ENCODE measurements at regions of chr2 and their contacts with region 1.

Region 1: GRCh38 chr2:73828818-73829570 is at the start of gene STAMBP:
- DNase-seq: peak; percentile 96
- H3K4me3 Mint-ChIP-seq: peak within 1 kb of the TSS; percentile 94
- H3K27ac Mint-ChIP-seq: peak within 1 kb of the TSS; percentile 94
- H3K4me1 Mint-ChIP-seq: peaks cover 43% of the 10 kb centered on the region
- H3K27me3 Mint-ChIP-seq: no peaks in the 10 kb centered on the region
- total RNA-seq, gene STAMBP: 80.5 to 80.7 TPM

Region 2: DNA sequence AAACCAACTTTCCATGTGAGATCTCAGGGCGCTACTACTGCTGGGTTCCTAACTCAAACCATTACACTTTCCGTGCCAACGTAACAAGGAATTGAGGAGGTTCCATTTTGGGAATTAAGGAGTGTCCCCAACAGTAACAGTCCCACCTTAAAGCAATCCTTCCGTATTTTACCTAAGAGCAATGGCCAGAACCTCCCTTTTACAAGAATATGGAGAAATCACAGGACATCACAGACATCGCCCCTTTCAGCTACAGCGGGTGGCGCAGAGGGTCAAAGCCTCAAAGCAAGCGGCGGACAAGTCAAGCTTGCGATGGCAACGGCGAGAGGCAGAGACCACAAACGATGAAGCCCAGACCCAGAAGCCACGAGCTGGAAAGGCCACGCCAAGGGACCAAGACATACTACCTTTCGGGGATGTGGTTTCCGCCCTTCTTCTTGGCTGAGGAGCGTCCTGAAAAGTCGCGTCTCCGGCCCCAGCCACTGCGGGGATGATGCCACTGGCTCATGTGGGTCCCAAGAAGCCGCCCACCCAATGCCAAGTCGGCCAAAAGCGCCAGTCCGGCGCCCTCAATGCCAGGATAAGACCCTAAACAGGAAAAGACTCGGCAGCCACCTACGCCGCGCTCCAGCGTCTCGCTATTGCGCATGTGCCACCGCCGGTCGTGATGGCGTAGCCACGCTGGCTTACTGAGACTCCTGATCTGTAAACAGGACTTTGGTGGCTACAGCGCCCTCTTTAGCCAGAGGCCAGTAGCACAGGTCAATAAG is 49.3 kb before region 1 on chr2 and contains the start of gene DUSP11:
- CTCF ChIA-PET with region 1: interaction called, 3 read pairs
- intact Hi-C with region 1: loop called (anchors 1 kb)
- DNase-seq: peak; percentile 99
- H3K4me3 Mint-ChIP-seq: peak within 1 kb of the TSS; percentile 99
- H3K27ac Mint-ChIP-seq: peak within 1 kb of the TSS; percentile 96
- H3K4me1 Mint-ChIP-seq: peaks cover 24% of the 10 kb centered on the region
- H3K27me3 Mint-ChIP-seq: peaks cover 2% of the 10 kb centered on the region
- total RNA-seq, gene DUSP11: 22.7 to 24.4 TPM

Region 3: DNA sequence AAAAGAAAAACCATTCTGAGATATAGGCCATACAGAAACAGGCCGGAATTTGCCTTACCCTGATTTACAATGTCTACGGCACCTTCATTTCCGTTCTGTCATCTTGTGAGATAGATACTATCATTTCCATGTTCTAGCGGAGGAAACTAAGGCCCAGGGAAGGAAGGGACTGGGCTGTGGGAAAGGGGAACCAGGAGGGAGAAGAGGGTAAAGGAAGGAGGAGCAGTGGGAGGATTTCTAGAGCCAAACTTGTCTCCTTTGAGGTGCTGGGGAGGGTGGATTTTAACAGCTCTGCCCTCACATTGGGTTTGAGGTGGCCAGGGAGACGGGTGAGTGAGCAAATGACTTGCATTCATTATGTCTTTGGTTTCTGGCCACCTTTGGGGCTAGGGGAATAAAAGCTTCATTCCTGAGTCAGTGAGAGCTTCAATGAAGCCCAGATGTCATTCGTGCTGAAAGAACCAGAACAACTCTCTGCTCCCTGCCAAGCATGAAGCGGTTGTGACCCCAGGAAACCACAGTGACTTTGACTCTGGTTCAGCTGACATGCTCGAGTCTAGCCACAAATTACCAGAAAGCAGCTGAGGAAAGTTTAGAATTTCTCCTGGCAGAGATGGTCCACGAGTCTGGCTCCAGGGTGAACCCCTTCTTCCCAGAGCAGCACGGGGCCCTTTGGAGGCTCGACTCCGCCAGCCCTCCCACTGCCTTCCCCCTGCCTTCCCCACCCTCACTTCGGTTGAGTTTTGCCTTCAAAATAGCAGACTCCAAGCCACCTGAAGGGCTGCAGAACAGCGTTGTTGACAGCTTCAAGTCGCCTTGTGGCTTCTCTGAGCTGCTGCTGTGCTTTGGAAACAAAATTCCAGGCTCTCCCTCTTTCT is 67.6 kb after region 1 on chr2:
- CTCF ChIA-PET with region 1: interaction called, 4 read pairs
- intact Hi-C with region 1: loop called (anchors 2 kb)
- DNase-seq: peak; percentile 72
- H3K4me3 Mint-ChIP-seq: peak overlapping the region; percentile 8
- H3K27ac Mint-ChIP-seq: peak overlapping the region; percentile 65
- H3K4me1 Mint-ChIP-seq: peaks cover 33% of the 10 kb centered on the region
- H3K27me3 Mint-ChIP-seq: no peaks in the 10 kb centered on the region

Region 4: GRCh38 chr2:73939419-73939818 is 110.4 kb after region 1 on chr2:
- CTCF ChIA-PET with region 1: interaction called, 4 read pairs
- intact Hi-C with region 1: loop called (anchors 1 kb)
- DNase-seq: peak; percentile 76
- H3K4me3 Mint-ChIP-seq: no peak overlapping the region
- H3K27ac Mint-ChIP-seq: peak overlapping the region; percentile 76
- H3K4me1 Mint-ChIP-seq: peaks cover 84% of the 10 kb centered on the region
- H3K27me3 Mint-ChIP-seq: no peaks in the 10 kb centered on the region

Region 5: GRCh38 chr2:74104839-74105238 is 275.8 kb after region 1 on chr2:
- CTCF ChIA-PET with region 1: interaction called, 10 read pairs
- intact Hi-C with region 1: loop called (anchors 10 kb)
- DNase-seq: no peak
- H3K4me3 Mint-ChIP-seq: no peak overlapping the region
- H3K27ac Mint-ChIP-seq: no peak overlapping the region
- H3K4me1 Mint-ChIP-seq: no peaks in the 10 kb centered on the region
- H3K27me3 Mint-ChIP-seq: no peaks in the 10 kb centered on the region

Region 6: DNA sequence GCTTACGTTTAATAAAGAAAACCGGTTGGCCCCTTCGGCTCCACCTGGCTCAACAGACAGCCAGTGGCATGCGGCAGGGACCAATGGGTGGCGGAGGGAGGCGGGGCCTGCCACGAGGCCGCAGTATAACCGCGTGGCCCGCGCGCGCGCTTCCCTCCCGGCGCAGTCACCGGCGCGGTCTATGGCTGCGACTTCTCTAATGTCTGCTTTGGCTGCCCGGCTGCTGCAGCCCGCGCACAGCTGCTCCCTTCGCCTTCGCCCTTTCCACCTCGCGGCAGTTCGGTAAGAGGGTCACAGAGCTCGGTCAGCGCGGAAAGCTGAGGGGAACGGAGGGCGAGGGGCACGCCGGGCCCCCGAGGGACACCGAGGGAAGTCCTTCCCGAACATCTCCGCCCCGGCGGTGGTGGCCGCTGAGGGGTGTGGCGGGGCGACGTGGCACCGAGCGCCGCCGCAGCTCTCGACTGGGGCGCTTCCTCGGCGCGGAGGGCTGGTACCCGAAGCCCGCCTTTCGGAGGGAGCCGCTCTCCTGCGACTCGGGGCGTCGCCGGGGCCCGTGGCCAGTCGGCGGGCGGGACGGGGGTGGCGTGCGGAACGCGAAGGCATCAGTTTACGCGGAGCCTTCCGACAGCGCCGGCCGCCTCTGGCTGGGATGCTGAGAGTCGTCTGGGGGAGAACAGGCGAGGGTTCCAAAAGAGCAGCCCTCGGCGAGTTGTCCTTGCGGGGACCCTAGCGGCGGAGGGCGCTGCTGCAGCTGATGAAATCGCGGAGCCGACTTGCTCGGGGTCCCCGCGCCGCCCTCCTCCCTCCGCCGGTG is 369.7 kb after region 1 on chr2 and contains the start of gene MTHFD2:
- CTCF ChIA-PET with region 1: interaction called, 5 read pairs
- intact Hi-C with region 1: loop called (anchors 1 kb)
- DNase-seq: peak; percentile 95
- H3K4me3 Mint-ChIP-seq: peak within 1 kb of the TSS; percentile 97
- H3K27ac Mint-ChIP-seq: peak within 1 kb of the TSS; percentile 99
- H3K4me1 Mint-ChIP-seq: peaks cover 36% of the 10 kb centered on the region
- H3K27me3 Mint-ChIP-seq: no peaks in the 10 kb centered on the region
- total RNA-seq, gene MTHFD2: 683 to 692 TPM

Region 7: DNA sequence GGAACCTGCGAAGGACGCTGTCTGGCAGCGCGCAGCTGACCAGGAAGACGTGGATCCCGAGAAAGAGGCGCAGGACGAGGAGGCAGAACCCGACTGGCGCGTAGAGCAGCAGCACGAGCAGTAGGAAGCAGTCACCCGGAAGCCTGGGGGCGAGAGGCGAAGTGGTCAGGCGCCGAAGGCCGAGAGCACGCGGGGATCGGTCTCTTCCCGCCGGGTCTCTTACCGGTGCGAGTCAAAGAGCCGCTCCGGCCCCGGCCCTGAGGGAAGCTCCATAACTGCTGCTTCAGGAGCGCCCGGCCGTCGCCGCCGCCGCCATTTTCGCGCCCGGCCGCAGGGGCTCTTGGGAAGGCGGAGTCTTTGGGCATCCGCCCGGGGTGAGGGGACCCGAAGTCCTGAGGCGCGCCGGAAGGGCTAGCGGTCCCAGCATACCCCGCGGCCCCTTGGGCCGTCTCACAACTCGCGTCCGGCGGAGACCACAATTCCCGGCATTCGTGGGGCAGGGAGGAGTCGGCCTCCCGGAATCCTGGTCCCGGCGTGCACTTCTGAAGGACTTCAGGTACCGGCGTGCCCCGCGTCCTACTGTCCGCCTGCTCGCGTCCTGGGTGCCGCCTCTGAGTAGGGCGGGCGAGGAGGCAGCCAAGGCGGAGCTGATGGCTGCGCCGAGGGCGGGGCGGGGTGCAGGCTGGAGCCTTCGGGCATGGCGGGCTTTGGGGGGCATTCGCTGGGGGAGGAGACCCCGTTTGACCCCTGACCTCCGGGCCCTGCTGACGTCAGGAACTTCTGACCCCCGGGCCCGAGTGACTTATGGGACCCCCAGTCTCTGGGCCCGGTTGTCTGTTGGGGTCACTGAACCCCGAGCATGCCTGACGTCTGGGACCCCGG is 700.6 kb after region 1 on chr2 and contains the starts of genes AUP1 and HTRA2:
- CTCF ChIA-PET with region 1: no interaction called
- intact Hi-C with region 1: loop called (anchors 10 kb)
- DNase-seq: peak; percentile 96
- H3K4me3 Mint-ChIP-seq: peak within 1 kb of the TSS; percentile 98
- H3K27ac Mint-ChIP-seq: peak within 1 kb of the TSS; percentile 91
- H3K4me1 Mint-ChIP-seq: peaks cover 40% of the 10 kb centered on the region
- H3K27me3 Mint-ChIP-seq: no peaks in the 10 kb centered on the region
- total RNA-seq, gene AUP1: 77.4 to 78.5 TPM
- total RNA-seq, gene HTRA2: 39.0 to 39.7 TPM

Measured in activated naive CD4-positive, alpha-beta T cell treated with anti-CD3 and anti-CD28 coated beads for 36 hours (primary cell).